Left lung (tissue), 14 donors: ENCODE measurements at regions of chr3 and their contacts with region 1.

Region 1: DNA sequence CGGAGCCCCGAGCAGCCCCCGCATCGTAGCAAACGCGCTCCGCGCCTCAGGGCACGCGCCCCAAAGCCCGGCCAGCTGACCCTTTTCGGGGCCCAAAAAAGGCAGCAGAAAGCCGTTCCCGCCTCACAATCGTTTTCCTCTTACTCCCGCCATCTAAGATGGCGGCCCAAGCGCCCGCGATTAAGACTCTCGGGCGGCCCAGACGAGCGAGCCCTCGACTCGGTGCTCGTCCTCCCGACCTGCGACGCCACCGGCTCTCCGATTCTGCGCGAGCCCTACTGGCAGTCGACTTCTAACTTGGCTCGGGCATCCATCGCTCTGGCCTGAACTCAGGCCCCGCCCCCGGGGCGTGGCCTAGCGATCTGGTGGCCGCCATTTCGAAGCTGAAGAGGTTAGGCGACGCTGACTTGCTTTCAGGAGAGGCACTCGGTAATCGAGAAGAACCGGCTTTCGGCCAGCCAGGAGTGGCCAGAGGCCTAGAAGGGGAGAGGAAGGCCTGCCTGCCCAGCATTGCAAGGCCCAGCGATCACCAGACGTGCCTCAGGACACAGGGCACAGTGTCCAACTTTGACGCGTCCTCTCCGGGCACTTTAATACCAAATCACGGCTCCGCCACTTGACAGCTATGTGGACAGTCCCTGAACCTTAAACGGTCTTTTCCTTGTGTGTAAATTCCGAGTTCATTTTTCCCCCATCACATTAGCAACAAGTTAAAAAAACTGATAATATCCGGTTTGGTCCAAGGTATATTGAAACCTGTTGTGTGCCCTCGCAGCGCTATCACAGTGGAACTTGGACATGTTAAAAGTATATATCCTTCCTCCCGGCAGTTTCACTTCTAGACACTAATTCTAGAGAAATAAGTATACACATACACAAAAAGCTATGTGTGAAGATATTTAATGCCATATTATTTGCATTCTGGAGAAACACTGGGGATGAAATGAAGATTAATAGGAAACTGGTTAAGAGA is at the start of gene RAF1:
- DNase-seq: peak; percentile 99 to 100 (median 100)
- ATAC-seq: peak; percentile 97
- H3K4me3 ChIP-seq: peak within 1 kb of the TSS; percentile 71 to 83
- H3K27ac ChIP-seq: peak within 1 kb of the TSS; percentile 98 to 100
- H3K4me1 ChIP-seq: peaks cover 15 to 43% of the 10 kb centered on the region in 2 donors
- H3K27me3 ChIP-seq: no peaks in the 10 kb centered on the region
- CTCF ChIP-seq: peak in 1 of 2 donors; percentile 15
- polyA plus RNA-seq, gene RAF1: 125 to 147 (median 130) TPM

Region 2: GRCh38 chr3:12568747-12569146 is 95.5 kb before region 1 on chr3:
- intact Hi-C with region 1: loop called in 1 of 2 experiments (anchors 5 kb)
- DNase-seq: no peak
- ATAC-seq: no peak
- H3K4me3 ChIP-seq: no peak overlapping the region
- H3K27ac ChIP-seq: no peak overlapping the region
- H3K4me1 ChIP-seq: no peaks in the 10 kb centered on the region
- H3K27me3 ChIP-seq: no peaks in the 10 kb centered on the region
- CTCF ChIP-seq: no peak